ENCODE measurements at regions of chr6 and their contacts with region 1.

Region 1: GRCh38 chr6:72411872-72412708 is 209.8 kb upstream of the KCNQ5 start:
- DNase-seq: peak; percentile 65 to 85 (median 76)
- H3K4me3 ChIP-seq: no peak overlapping the region
- H3K4me3 Mint-ChIP-seq: no peak overlapping the region
- H3K27ac ChIP-seq: no peak overlapping the region
- H3K27ac Mint-ChIP-seq: no peak overlapping the region
- H3K4me1 ChIP-seq: no peaks in the 10 kb centered on the region
- H3K4me1 Mint-ChIP-seq: peaks cover 0 to 2% (median under 1%) of the 10 kb centered on the region in 4 donors
- H3K27me3 ChIP-seq: no peaks in the 10 kb centered on the region
- H3K27me3 Mint-ChIP-seq: peaks cover 3 to 7% of the 10 kb centered on the region in 2 donors

Region 2: GRCh38 chr6:72401865-72402264 is 10.2 kb before region 1 on chr6:
- CTCF ChIA-PET with region 1: interaction called, 17 read pairs
- POLR2A ChIA-PET with region 1: no interaction called
- intact Hi-C with region 1: no loop called
- DNase-seq: no peak
- H3K4me3 ChIP-seq: no peak overlapping the region
- H3K4me3 Mint-ChIP-seq: no peak overlapping the region
- H3K27ac ChIP-seq: no peak overlapping the region
- H3K27ac Mint-ChIP-seq: no peak overlapping the region
- H3K4me1 ChIP-seq: no peaks in the 10 kb centered on the region
- H3K4me1 Mint-ChIP-seq: no peaks in the 10 kb centered on the region
- H3K27me3 ChIP-seq: no peaks in the 10 kb centered on the region
- H3K27me3 Mint-ChIP-seq: peaks cover 1 to 3% of the 10 kb centered on the region in 2 donors

Region 3: DNA sequence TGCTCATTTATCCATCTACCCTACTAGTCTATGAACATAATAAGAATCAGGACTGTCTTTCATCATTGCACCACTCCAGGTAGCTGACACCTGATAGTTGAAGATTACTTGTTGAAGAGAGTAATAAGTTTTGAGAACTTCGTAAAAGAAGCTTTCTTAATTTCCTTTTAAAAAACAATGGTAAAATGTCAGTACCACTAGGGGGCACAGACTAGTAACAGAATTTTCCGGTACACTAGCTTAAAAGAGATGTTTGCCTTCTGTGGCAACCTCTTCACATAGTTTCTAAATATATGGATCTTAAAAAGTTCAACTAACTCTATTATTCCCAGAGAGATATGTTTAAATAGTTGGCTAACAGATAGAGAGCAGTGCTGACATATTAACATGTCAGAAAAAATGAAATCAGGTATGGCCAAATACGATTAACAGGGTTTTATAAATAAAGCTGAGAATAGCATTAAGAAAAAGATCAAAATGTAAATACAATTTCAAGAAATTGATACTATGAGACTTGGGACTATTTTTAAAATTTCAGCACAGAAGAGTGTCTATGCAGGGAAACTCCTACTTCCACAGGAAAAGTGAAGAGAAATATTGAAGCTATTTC is 204.4 kb after region 1 on chr6:
- CTCF ChIA-PET with region 1: interaction called, 7 read pairs
- POLR2A ChIA-PET with region 1: no interaction called
- intact Hi-C with region 1: loop called (anchors 2 kb)
- DNase-seq: peak in 4 of 5 donors; percentile 8 to 32 (median 22)
- H3K4me3 ChIP-seq: no peak overlapping the region
- H3K4me3 Mint-ChIP-seq: no peak overlapping the region
- H3K27ac ChIP-seq: no peak overlapping the region
- H3K27ac Mint-ChIP-seq: peak overlapping the region in 2 of 7 donors; percentile 14 to 36
- H3K4me1 ChIP-seq: peaks cover 36% of the 10 kb centered on the region
- H3K4me1 Mint-ChIP-seq: peaks cover 20 to 41% (median 29%) of the 10 kb centered on the region in 4 donors
- H3K27me3 ChIP-seq: no peaks in the 10 kb centered on the region
- H3K27me3 Mint-ChIP-seq: no peaks in the 10 kb centered on the region

Region 4: DNA sequence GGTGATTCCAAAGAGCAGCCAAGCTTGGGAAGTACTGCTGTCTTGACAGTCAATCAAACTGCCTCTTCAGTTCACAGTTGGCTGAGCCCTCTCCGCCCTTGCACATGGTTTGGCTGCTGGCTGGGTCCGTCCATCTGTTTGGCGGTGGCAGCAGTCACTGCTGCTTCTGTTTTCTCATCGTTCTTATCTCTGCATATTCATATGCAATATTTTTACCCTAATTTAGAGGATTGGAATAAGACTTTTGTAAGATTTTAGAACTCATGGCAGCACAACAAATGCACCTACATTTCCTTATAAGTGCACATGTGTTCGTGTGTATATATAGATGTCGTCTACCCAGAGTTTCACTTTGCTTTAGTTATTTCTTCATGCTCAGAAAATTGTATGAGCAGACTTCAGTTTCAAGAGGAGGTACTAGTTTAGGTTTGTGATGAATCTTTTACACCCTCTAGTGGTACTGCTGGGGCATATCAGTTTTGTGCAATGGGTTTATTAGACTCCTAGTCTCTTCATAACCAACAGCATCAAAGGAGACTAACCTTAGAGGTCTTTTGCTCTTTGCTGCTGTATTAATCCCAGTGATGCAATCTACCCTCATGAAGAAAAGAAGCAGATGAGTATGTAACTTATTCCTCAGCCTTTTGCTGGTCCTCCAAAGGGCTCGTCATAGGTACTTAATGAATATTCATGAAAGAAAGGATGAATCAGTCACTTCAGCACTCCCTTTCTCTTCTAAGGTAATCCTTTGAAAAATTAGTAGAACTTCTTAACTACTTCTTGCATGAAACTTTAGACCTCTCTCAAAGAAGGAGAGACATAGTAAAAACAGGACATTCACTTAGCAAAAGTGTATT is 768.9 kb after region 1 on chr6:
- CTCF ChIA-PET with region 1: interaction called, 11 read pairs
- POLR2A ChIA-PET with region 1: no interaction called
- intact Hi-C with region 1: loop called (anchors 1 kb)
- DNase-seq: peak; percentile 32 to 46 (median 43)
- H3K4me3 ChIP-seq: no peak overlapping the region
- H3K4me3 Mint-ChIP-seq: peak overlapping the region in 7 of 8 donors; percentile 0 to 61 (median 45)
- H3K27ac ChIP-seq: no peak overlapping the region
- H3K27ac Mint-ChIP-seq: no peak overlapping the region
- H3K4me1 ChIP-seq: no peaks in the 10 kb centered on the region
- H3K4me1 Mint-ChIP-seq: peaks cover 0 to 5% (median 4%) of the 10 kb centered on the region in 4 donors
- H3K27me3 ChIP-seq: no peaks in the 10 kb centered on the region
- H3K27me3 Mint-ChIP-seq: peaks cover 2 to 3% of the 10 kb centered on the region in 2 donors